ENCODE measurements at regions of chr3 and their contacts with region 1.

Region 1: GRCh38 chr3:63349583-63350521 is 71.7 kb downstream of the SYNPR start:
- DNase-seq: peak; percentile 20 to 38
- H3K4me3 ChIP-seq: no peak overlapping the region
- H3K27ac ChIP-seq: no peak overlapping the region
- H3K4me1 ChIP-seq: no peaks in the 10 kb centered on the region
- H3K27me3 ChIP-seq: peaks cover 6% of the 10 kb centered on the region; the same call in 1 of the 2 replicates
- CTCF ChIP-seq: peak; percentile 72

Region 2: GRCh38 chr3:63818281-63819150 is 468.7 kb after region 1 on chr3:
- CTCF ChIA-PET with region 1: no interaction called
- POLR2A ChIA-PET with region 1: no interaction called
- intact Hi-C with region 1: loop called (anchors 1 kb)
- DNase-seq: peak in 1 of 2 experiments; percentile 40
- H3K4me3 ChIP-seq: no peak overlapping the region
- H3K27ac ChIP-seq: no peak overlapping the region
- H3K4me1 ChIP-seq: no peaks in the 10 kb centered on the region
- H3K27me3 ChIP-seq: no peaks in the 10 kb centered on the region
- CTCF ChIP-seq: peak; percentile 81

Region 3: GRCh38 chr3:64008017-64008971 is 658.4 kb after region 1 on chr3:
- CTCF ChIA-PET with region 1: no interaction called
- POLR2A ChIA-PET with region 1: no interaction called
- intact Hi-C with region 1: loop called (anchors 5 kb)
- DNase-seq: no peak
- H3K4me3 ChIP-seq: no peak overlapping the region
- H3K27ac ChIP-seq: no peak overlapping the region
- H3K4me1 ChIP-seq: no peaks in the 10 kb centered on the region
- H3K27me3 ChIP-seq: no peaks in the 10 kb centered on the region
- CTCF ChIP-seq: no peak

Region 4: DNA sequence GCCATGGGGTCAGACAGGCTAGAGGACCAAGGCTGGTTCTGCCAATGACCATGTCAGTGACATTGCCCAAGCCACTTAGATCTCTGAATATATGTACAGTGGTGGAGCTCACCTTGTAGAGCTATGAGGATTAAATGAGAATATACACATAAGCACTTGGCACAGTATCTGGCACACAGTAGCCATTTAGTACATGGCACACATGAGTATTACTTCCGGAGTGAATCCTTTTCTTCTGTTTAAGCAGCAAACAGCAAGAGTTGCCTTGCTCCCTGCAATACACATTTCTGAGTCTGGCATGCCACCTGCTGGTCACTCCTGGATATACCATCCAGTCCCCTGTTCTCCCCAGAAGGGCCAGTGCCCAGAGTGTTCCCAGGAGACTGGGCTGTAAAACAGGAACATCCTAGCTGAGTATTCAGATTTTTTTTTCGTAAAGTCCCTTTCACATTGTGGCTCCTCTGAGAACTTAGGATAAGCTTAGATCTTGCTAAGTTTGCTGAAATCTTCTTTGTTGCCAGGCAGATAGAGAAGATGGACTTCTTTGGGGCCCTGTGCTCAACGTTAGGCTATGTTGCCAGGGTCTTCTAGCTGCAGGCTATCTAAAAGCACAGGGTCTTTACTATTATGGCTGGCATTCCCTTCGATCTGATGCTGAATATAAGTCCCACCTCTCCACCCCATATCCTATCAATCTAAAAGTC is 1134.6 kb after region 1 on chr3:
- CTCF ChIA-PET with region 1: no interaction called
- POLR2A ChIA-PET with region 1: no interaction called
- intact Hi-C with region 1: loop called (anchors 1 kb)
- DNase-seq: peak; percentile 60 to 75
- H3K4me3 ChIP-seq: no peak overlapping the region
- H3K27ac ChIP-seq: no peak overlapping the region
- H3K4me1 ChIP-seq: no peaks in the 10 kb centered on the region
- H3K27me3 ChIP-seq: no peaks in the 10 kb centered on the region
- CTCF ChIP-seq: peak; percentile 87

Measured in PC-9 (cell line).